CD8-positive, alpha-beta T cell (primary cell): ENCODE measurements at regions of chr1 and their contacts with region 1.

Region 1: GRCh38 chr1:84077476-84078107 is 66.5 kb upstream of the PRKACB start:
- DNase-seq: peak; percentile 48 to 88 (median 74)
- ATAC-seq: peak; percentile 89
- H3K4me3 ChIP-seq: peak overlapping the region; percentile 90 to 91
- H3K4me3 Mint-ChIP-seq: peak overlapping the region; percentile 87
- H3K27ac ChIP-seq: peak overlapping the region; percentile 72 to 76
- H3K27ac Mint-ChIP-seq: peak overlapping the region; percentile 86
- H3K4me1 ChIP-seq: peaks cover 14% of the 10 kb centered on the region
- H3K4me1 Mint-ChIP-seq: peaks cover 13% of the 10 kb centered on the region
- H3K27me3 ChIP-seq: no peaks in the 10 kb centered on the region
- H3K27me3 Mint-ChIP-seq: no peaks in the 10 kb centered on the region
- CTCF ChIP-seq: no peak

Region 2: GRCh38 chr1:84090447-84091245 is 13.1 kb after region 1 on chr1:
- CTCF ChIA-PET with region 1: no interaction called
- POLR2A ChIA-PET with region 1: interaction called, 4 read pairs
- intact Hi-C with region 1: loop called (anchors 1 to 2 kb)
- DNase-seq: peak in 5 of 9 experiments; percentile 4 to 72 (median 46)
- ATAC-seq: peak; percentile 80
- H3K4me3 ChIP-seq: peak overlapping the region; percentile 25 to 40
- H3K4me3 Mint-ChIP-seq: peak overlapping the region; percentile 81
- H3K27ac ChIP-seq: peak overlapping the region; percentile 49 to 73
- H3K27ac Mint-ChIP-seq: peak overlapping the region; percentile 89
- H3K4me1 ChIP-seq: peaks cover 19% of the 10 kb centered on the region
- H3K4me1 Mint-ChIP-seq: peaks cover 31% of the 10 kb centered on the region
- H3K27me3 ChIP-seq: no peaks in the 10 kb centered on the region
- H3K27me3 Mint-ChIP-seq: no peaks in the 10 kb centered on the region
- CTCF ChIP-seq: no peak

Region 3: GRCh38 chr1:84122780-84123382 is 45.3 kb after region 1 on chr1:
- CTCF ChIA-PET with region 1: no interaction called
- POLR2A ChIA-PET with region 1: interaction called, 4 read pairs
- intact Hi-C with region 1: loop called in 1 of 2 experiments (anchors 5 kb)
- DNase-seq: peak; percentile 15 to 73 (median 54)
- ATAC-seq: peak; percentile 68
- H3K4me3 ChIP-seq: no peak overlapping the region
- H3K4me3 Mint-ChIP-seq: no peak overlapping the region
- H3K27ac ChIP-seq: no peak overlapping the region
- H3K27ac Mint-ChIP-seq: no peak overlapping the region
- H3K4me1 ChIP-seq: no peaks in the 10 kb centered on the region
- H3K4me1 Mint-ChIP-seq: no peaks in the 10 kb centered on the region
- H3K27me3 ChIP-seq: no peaks in the 10 kb centered on the region
- H3K27me3 Mint-ChIP-seq: no peaks in the 10 kb centered on the region
- CTCF ChIP-seq: peak; percentile 90

Region 4: DNA sequence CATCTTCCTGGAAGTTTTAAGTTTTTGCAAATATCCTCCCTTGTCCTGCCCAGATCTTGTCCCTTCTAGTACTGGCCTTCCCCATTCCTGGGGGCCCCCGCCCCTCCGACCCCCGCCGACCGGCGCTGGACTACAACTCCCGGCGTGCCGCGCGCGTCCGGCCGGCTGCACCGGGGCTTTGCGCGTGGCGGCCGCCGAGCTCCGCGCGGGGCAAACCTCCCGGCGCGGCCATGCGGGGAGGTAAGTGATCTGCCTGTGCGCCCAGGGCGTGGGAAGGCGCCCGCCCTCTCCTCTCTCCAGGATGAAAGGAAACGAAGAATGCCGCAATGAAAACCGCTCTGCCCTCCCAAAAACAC is 220.7 kb after region 1 on chr1:
- CTCF ChIA-PET with region 1: no interaction called
- POLR2A ChIA-PET with region 1: no interaction called
- intact Hi-C with region 1: loop called in 1 of 2 experiments (anchors 1 kb)
- DNase-seq: peak; percentile 12 to 75 (median 41)
- ATAC-seq: peak; percentile 70
- H3K4me3 ChIP-seq: peak overlapping the region; percentile 76 to 94
- H3K4me3 Mint-ChIP-seq: peak overlapping the region; percentile 78
- H3K27ac ChIP-seq: peak overlapping the region; percentile 8 to 53
- H3K27ac Mint-ChIP-seq: peak overlapping the region; percentile 46
- H3K4me1 ChIP-seq: peaks cover 17% of the 10 kb centered on the region
- H3K4me1 Mint-ChIP-seq: peaks cover 37% of the 10 kb centered on the region
- H3K27me3 ChIP-seq: no peaks in the 10 kb centered on the region
- H3K27me3 Mint-ChIP-seq: peaks cover 5% of the 10 kb centered on the region
- CTCF ChIP-seq: no peak

Region 5: DNA sequence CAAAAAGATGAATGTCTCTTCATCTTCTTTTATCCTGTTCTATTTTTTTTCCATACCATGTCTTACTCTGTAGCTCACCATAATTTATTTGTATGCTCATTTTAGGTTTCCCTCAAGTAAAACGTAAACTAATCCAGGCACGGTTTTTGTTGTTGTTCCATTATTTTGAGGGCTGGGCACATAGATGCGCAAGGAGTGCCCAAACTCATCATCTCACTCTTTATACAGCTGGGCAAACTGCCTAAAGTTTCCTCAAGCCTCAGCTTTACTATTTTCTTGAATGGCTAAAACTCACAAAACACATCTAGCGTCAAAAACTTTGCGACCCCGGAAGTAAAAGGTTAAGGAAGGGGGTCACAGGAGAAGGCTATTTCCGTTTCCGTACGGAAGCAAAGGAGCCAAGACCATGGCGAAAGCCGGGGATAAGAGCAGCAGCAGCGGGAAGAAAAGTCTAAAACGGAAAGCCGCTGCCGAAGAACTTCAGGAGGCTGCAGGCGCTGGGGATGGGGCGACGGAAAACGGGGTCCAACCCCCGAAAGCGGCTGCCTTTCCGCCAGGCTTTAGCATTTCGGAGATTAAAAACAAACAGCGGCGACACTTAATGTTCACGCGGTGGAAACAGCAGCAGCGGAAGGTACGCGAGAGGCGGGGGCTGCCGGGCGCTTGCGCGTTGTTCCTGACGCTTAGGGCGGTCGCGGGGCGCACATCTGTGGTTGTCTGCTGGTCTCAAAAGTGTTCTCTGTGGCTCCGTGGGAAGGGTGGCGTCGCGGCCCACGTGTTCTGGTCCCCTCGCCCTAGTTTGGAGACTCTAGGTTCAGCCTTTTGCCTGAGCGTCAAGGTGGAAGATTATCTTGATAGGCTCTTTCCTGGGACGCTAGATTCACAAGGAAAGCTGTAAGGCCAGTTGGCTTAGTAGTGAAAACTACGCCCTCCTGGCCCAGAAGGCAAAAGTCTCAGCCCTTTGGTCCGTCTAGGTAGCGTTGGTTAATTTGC is 401.6 kb after region 1 on chr1 and contains the start of gene RPF1:
- CTCF ChIA-PET with region 1: no interaction called
- POLR2A ChIA-PET with region 1: no interaction called
- intact Hi-C with region 1: loop called in 1 of 2 experiments (anchors 1 kb)
- DNase-seq: peak; percentile 55 to 90 (median 82)
- ATAC-seq: peak; percentile 96
- H3K4me3 ChIP-seq: peak within 1 kb of the TSS; percentile 81 to 83
- H3K4me3 Mint-ChIP-seq: peak within 1 kb of the TSS; percentile 99
- H3K27ac ChIP-seq: peak within 1 kb of the TSS; percentile 88
- H3K27ac Mint-ChIP-seq: peak within 1 kb of the TSS; percentile 99
- H3K4me1 ChIP-seq: peaks cover 31% of the 10 kb centered on the region
- H3K4me1 Mint-ChIP-seq: peaks cover 42% of the 10 kb centered on the region
- H3K27me3 ChIP-seq: peaks cover 0 to 10% of the 10 kb centered on the region in 2 experiments
- H3K27me3 Mint-ChIP-seq: peaks cover 26% of the 10 kb centered on the region
- CTCF ChIP-seq: no peak
- total RNA-seq, gene RPF1: 84.2 to 85.3 TPM

Region 6: GRCh38 chr1:84506002-84506728 is 428.6 kb after region 1 on chr1 and contains the starts of genes GNG5 and SPATA1:
- CTCF ChIA-PET with region 1: no interaction called
- POLR2A ChIA-PET with region 1: no interaction called
- intact Hi-C with region 1: loop called in 1 of 2 experiments (anchors 2 kb)
- DNase-seq: peak; percentile 91 to 98 (median 98)
- ATAC-seq: peak; percentile 89
- H3K4me3 ChIP-seq: peak within 1 kb of the TSS; percentile 87 to 95
- H3K4me3 Mint-ChIP-seq: peak within 1 kb of the TSS; percentile 94
- H3K27ac ChIP-seq: peak within 1 kb of the TSS; percentile 75 to 88
- H3K27ac Mint-ChIP-seq: peak within 1 kb of the TSS; percentile 96
- H3K4me1 ChIP-seq: peaks cover 40% of the 10 kb centered on the region
- H3K4me1 Mint-ChIP-seq: peaks cover 45% of the 10 kb centered on the region
- H3K27me3 ChIP-seq: no peaks in the 10 kb centered on the region
- H3K27me3 Mint-ChIP-seq: no peaks in the 10 kb centered on the region
- CTCF ChIP-seq: no peak
- total RNA-seq, gene GNG5: 19.5 TPM
- total RNA-seq, gene SPATA1: 0.52 to 0.94 TPM

Region 7: GRCh38 chr1:84573967-84574842 is 496.6 kb after region 1 on chr1 and contains the start of gene CTBS:
- CTCF ChIA-PET with region 1: no interaction called
- POLR2A ChIA-PET with region 1: no interaction called
- intact Hi-C with region 1: loop called in 1 of 2 experiments (anchors 5 kb)
- DNase-seq: peak; percentile 67 to 93 (median 85)
- ATAC-seq: peak; percentile 91
- H3K4me3 ChIP-seq: peak within 1 kb of the TSS; percentile 81 to 92
- H3K4me3 Mint-ChIP-seq: peak within 1 kb of the TSS; percentile 96
- H3K27ac ChIP-seq: peak within 1 kb of the TSS; percentile 94 to 96
- H3K27ac Mint-ChIP-seq: peak within 1 kb of the TSS; percentile 99
- H3K4me1 ChIP-seq: peaks cover 20% of the 10 kb centered on the region
- H3K4me1 Mint-ChIP-seq: peaks cover 42% of the 10 kb centered on the region
- H3K27me3 ChIP-seq: no peaks in the 10 kb centered on the region
- H3K27me3 Mint-ChIP-seq: no peaks in the 10 kb centered on the region
- CTCF ChIP-seq: no peak
- total RNA-seq, gene CTBS: 17.3 to 19.7 TPM